PC-9 (cell line): ENCODE measurements at regions of chr9 and their contacts with region 1.

Region 1: GRCh38 chr9:103025796-103026195 is 30.7 kb downstream of the CYLC2 start:
- DNase-seq: no peak
- H3K4me3 ChIP-seq: no peak overlapping the region
- H3K27ac ChIP-seq: no peak overlapping the region
- H3K4me1 ChIP-seq: no peaks in the 10 kb centered on the region
- H3K27me3 ChIP-seq: no peaks in the 10 kb centered on the region
- CTCF ChIP-seq: no peak

Region 2: GRCh38 chr9:103078581-103078980 is 52.8 kb after region 1 on chr9:
- CTCF ChIA-PET with region 1: no interaction called
- POLR2A ChIA-PET with region 1: no interaction called
- intact Hi-C with region 1: loop called (anchors 10 kb)
- DNase-seq: no peak
- H3K4me3 ChIP-seq: no peak overlapping the region
- H3K27ac ChIP-seq: no peak overlapping the region
- H3K4me1 ChIP-seq: no peaks in the 10 kb centered on the region
- H3K27me3 ChIP-seq: no peaks in the 10 kb centered on the region
- CTCF ChIP-seq: 0 out of 2 replicates have a peak, but pooled peaks have one; percentile 33

Region 3: GRCh38 chr9:103169798-103170197 is 144.0 kb after region 1 on chr9:
- CTCF ChIA-PET with region 1: no interaction called
- POLR2A ChIA-PET with region 1: no interaction called
- intact Hi-C with region 1: no loop called
- DNase-seq: no peak
- H3K4me3 ChIP-seq: no peak overlapping the region
- H3K27ac ChIP-seq: no peak overlapping the region
- H3K4me1 ChIP-seq: no peaks in the 10 kb centered on the region
- H3K27me3 ChIP-seq: no peaks in the 10 kb centered on the region
- CTCF ChIP-seq: no peak